ENCODE measurements at regions of chr1 and their contacts with region 1.

Region 1: DNA sequence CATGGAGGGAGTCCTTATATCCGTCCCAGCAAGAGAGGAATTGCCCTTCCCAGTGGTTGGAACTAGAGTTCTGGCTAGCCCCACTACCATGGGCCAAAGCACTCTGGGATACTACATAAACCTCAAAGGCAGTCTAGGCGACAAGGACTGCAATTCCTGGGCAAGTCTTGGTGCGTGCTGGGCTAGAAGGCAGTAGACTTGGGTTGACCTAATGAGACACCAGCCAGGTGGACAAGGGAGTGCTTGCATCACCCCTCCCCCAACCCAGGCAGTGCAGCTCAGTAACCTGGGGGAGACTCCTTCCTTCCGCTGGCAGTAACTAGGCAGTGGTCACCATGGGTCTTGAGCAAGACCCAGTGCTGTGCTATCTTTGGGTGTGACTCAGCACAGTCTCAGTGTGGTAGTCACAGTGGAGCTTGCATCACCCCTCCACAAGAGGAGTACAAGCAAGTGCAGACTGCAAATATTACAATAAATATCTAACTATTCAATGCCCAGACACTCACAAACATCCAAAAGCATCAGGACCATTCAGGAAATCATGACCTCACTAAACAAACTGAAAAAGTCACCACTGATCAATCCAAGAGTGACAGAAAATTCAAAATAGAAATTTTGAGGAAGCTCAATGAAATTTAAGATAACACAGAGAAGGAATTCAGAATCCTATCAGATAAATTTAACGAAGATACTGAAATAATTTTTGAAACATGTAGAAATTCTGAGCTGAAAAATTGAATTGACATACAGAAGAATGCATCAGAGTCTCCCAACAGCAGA is 84.7 kb upstream of the LYPLAL1 start:
- H3K4me3 Mint-ChIP-seq: no peak overlapping the region
- H3K27ac Mint-ChIP-seq: peak overlapping the region; percentile 92
- H3K4me1 Mint-ChIP-seq: peaks cover 55% of the 10 kb centered on the region
- H3K27me3 Mint-ChIP-seq: no peaks in the 10 kb centered on the region

Region 2: GRCh38 chr1:219173758-219174588 is 85.0 kb after region 1 on chr1 and contains the start of gene LYPLAL1:
- intact Hi-C with region 1: loop called (anchors 5 kb)
- H3K4me3 Mint-ChIP-seq: peak within 1 kb of the TSS; percentile 98
- H3K27ac Mint-ChIP-seq: peak within 1 kb of the TSS; percentile 97
- H3K4me1 Mint-ChIP-seq: peaks cover 37% of the 10 kb centered on the region
- H3K27me3 Mint-ChIP-seq: no peaks in the 10 kb centered on the region

Region 3: DNA sequence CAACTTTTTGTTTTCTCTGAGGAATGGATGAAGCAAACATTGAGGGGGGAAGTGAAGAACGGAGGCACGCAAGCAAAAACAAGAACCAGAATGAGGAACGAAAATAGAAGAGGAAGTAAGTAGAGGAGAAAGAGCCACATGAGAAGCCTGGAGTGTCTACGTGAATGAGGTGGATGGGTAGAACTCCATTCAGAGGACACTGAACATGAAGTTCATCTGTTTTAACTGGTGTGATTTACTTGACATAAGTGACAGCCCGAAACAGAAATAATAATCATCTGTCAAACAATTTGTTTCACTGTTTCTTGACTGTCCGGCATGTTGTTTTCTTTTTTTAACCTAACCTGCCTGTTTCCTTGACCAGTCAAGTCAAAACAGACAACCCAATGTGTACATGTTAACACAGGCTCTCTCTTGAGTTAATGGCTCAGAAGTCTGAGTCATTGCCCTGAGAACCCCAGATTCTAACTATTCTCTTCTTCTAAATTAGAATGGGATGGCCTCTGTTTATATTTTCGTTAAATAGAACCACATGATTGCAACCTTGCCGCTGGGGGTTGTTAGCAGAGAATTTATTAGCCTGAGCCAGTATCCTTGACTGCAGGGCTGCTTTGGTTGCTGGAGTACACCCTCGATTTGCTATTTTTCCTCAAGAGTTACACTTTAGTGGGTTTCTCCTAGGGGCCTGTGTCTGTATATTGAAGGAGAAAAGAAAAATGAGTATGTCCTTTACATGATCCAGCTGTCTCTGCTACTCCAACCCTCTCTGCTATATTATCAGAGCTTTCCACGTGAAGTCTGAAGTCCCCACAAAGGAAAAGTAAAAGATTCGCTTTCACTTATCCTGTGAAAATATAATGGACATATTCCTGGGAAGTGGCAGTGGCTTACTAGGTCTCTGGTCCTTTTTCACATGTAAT is 372.2 kb after region 1 on chr1:
- intact Hi-C with region 1: loop called (anchors 2 kb)
- H3K4me3 Mint-ChIP-seq: no peak overlapping the region
- H3K27ac Mint-ChIP-seq: peak overlapping the region; percentile 93
- H3K4me1 Mint-ChIP-seq: peaks cover 55% of the 10 kb centered on the region
- H3K27me3 Mint-ChIP-seq: no peaks in the 10 kb centered on the region

Region 4: DNA sequence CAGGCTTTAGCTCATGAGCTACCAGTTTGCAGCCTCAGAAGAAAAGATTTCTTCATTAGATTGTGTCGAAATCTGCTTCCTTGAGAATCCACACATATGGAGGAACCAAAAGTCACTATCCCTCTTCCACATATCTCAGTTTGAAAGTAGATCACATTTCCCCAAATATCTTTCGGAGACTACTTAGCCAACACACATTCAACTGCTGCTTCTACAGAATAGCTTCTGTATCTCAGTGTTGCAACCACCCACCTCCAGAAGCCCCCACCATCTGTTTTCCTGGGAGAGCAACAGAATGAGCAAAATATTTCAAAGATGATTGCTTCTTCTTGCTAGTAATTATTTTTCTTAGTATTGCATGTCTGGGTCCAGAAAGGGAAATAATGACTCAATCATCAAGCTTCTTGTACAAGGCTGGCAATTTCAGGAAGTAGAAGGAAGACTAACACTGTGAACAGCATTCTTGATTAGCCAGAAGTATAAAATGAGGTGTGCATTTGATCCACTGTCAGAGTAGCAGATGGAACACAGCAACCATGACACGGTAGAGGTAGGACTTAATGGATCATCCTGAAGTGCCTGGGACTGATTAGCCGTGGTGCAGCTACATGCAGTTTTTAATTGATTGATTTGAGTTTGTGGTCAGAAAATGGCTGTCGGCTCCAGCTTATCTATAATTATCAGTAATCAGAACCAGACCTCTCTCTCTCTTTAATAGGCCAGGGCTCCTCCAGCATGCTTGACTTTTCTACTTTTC is 499.0 kb after region 1 on chr1:
- intact Hi-C with region 1: loop called (anchors 5 kb)
- H3K4me3 Mint-ChIP-seq: peak overlapping the region; percentile 60
- H3K27ac Mint-ChIP-seq: peak overlapping the region; percentile 85
- H3K4me1 Mint-ChIP-seq: peaks cover 55% of the 10 kb centered on the region
- H3K27me3 Mint-ChIP-seq: no peaks in the 10 kb centered on the region

Measured in dendritic cell treated with granulocyte-macrophage colony-stimulating factor and Interleukin-4, amounts not matched to agents 40 ng/mL and 50 ng/mL, for 4 days (primary cell).